Activated CD4-positive, alpha-beta memory T cell treated with anti-CD3 and anti-CD28 coated beads for 36 hours (primary cell): ENCODE measurements at regions of chr11 and their contacts with region 1.

Region 1: DNA sequence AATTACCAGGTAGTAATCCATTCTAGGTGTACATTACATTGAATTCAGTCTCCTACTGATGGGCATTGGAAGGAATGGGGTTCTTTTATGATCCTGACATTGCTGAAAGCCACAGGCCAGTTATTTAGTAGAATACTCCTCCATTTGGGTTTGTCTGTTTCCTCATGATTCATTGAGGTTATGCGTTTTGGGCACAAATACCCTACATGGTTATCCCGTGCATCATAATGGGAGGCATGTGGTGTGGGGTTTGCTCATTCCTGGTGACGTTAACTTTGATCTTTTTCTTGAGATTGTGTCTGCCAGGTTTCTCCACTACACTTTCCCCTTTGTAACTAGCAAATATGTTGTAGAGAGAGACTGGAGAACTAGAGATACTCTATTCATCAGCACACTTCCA is 5.5 kb downstream of the FOLR3 start:
- DNase-seq: peak; percentile 72
- H3K4me3 Mint-ChIP-seq: no peak overlapping the region
- H3K27ac Mint-ChIP-seq: peak overlapping the region; percentile 13
- H3K4me1 Mint-ChIP-seq: peaks cover 21% of the 10 kb centered on the region
- H3K27me3 Mint-ChIP-seq: peaks cover 11% of the 10 kb centered on the region

Region 2: GRCh38 chr11:72024069-72024754 is 116.9 kb before region 1 on chr11:
- CTCF ChIA-PET with region 1: interaction called, 118 read pairs
- POLR2A ChIA-PET with region 1: interaction called, 3 read pairs
- intact Hi-C with region 1: loop called (anchors 1 kb)
- DNase-seq: no peak
- H3K4me3 Mint-ChIP-seq: no peak overlapping the region
- H3K27ac Mint-ChIP-seq: peak overlapping the region; percentile 2
- H3K4me1 Mint-ChIP-seq: peaks cover 24% of the 10 kb centered on the region
- H3K27me3 Mint-ChIP-seq: no peaks in the 10 kb centered on the region

Region 3: DNA sequence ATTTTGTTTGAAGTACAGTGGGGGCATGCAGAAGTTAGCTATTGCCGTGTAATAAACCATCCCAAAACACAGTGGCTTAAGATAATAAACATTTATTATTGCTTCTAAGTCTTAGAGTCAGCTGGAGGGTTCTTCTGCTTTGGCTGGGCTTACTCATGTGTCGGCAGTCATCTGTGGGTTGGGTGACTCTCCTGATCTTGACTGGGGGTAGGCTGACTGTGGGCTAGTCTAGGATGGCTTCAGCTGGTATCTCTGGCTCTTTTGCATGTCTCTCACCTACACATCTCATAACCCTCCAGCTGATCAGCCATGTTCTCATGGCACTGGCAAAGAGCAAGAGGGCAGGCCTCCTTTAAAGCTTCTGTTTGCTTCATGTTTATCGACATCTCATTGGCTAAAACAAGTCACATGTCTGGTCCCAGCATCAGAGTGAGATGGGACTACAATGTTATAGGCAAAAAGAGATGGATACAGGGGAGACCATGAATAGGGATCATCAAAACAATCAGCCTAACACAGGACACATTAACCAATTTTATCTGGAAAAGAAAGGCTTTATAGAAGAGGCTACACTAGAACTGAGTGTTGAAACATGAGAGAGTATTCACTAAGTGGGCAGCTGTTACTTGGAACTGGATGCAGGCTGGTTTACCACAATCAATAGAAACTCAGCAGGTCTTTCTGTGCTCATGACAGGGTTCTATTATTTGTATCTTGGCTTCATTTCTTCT is 55.3 kb before region 1 on chr11:
- CTCF ChIA-PET with region 1: interaction called, 18 read pairs
- POLR2A ChIA-PET with region 1: no interaction called
- intact Hi-C with region 1: no loop called
- DNase-seq: no peak
- H3K4me3 Mint-ChIP-seq: no peak overlapping the region
- H3K27ac Mint-ChIP-seq: peak overlapping the region; percentile 1
- H3K4me1 Mint-ChIP-seq: peaks cover 23% of the 10 kb centered on the region
- H3K27me3 Mint-ChIP-seq: no peaks in the 10 kb centered on the region

Region 4: GRCh38 chr11:72112321-72113219 is 28.5 kb before region 1 on chr11 and contains the start of gene ANAPC15:
- CTCF ChIA-PET with region 1: interaction called, 19 read pairs
- POLR2A ChIA-PET with region 1: interaction called, 4 read pairs
- intact Hi-C with region 1: loop called (anchors 1 kb)
- DNase-seq: peak; percentile 100
- H3K4me3 Mint-ChIP-seq: peak within 1 kb of the TSS; percentile 93
- H3K27ac Mint-ChIP-seq: peak within 1 kb of the TSS; percentile 100
- H3K4me1 Mint-ChIP-seq: peaks cover 18% of the 10 kb centered on the region
- H3K27me3 Mint-ChIP-seq: no peaks in the 10 kb centered on the region
- total RNA-seq, gene ANAPC15: 62.6 to 64.2 TPM

Region 5: DNA sequence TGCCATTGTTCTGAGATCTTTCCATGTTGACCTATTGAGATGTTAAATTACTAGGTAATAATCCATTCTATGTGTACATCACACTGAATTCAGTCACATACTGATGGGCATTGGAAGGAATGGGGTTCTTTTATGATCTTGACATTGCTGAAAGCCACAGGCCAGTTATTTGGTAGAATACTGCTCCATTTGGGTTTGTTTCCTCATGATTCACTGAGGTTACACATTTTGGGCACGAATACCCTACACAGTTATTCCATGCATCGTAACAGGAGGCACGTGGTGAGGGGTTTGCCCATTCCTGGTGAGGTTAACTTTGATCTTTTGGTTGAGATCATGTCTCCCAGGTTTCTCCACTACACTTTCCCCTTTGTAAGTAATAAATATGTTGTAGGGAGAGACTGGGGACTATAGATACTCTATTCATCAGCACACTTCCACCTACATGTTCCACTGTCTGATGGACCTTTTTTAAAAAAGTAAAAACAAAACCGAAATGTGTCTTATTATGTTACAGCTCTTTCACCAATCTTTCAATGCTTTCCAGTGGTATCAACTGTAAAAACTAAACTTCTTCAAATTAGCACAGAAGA is 38.8 kb after region 1 on chr11:
- CTCF ChIA-PET with region 1: interaction called, 34 read pairs
- POLR2A ChIA-PET with region 1: no interaction called
- intact Hi-C with region 1: loop called (anchors 1 kb)
- DNase-seq: peak; percentile 22
- H3K4me3 Mint-ChIP-seq: no peak overlapping the region
- H3K27ac Mint-ChIP-seq: no peak overlapping the region
- H3K4me1 Mint-ChIP-seq: peaks cover 14% of the 10 kb centered on the region
- H3K27me3 Mint-ChIP-seq: peaks cover 6% of the 10 kb centered on the region

Region 6: DNA sequence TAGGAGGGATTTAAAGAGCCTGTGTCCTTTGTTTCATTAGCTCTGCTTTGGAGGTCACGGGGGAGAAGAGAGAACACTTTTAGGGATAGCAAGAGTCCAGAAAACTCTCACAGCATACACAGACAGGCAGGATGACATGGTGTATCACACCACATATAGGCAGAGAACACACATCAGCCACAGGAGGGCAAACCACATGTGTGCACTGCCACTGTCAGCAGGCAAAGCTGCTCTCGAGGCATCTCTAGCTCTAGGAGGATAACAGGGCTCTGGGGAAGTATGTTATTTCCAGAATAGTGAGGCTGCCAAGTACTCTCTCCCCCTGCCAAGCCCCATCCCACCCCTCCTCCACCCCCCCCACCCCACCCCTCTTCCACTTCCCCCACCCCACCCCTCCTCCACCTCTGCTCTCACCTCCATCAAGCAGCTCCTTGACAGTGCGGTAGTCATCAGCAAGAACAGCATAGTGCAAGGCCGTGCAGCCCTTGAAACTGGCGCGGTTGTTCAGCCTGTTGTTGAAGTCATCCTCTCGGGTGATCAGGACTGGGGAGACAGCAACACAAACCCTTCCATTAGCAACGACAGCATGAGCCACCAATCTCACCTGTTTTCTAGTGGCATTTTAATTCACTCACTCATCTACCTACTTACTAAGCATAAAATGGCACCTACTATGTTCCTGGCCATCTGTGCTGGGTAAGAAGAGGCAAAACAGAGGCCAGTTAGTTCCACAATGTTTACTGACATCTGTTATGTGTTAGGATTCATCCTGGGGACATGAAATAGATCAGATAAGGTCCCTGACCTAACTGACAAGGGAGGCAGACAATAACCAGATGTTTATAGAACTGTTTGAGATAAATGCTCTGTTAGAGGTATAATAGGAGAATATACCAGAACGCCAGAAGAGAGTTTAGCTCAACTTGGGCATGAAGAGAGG is 217.7 kb after region 1 on chr11:
- CTCF ChIA-PET with region 1: no interaction called
- POLR2A ChIA-PET with region 1: no interaction called
- intact Hi-C with region 1: no loop called
- DNase-seq: no peak
- H3K4me3 Mint-ChIP-seq: no peak overlapping the region
- H3K27ac Mint-ChIP-seq: no peak overlapping the region
- H3K4me1 Mint-ChIP-seq: no peaks in the 10 kb centered on the region
- H3K27me3 Mint-ChIP-seq: no peaks in the 10 kb centered on the region

Region 7: GRCh38 chr11:73384872-73385689 is 1244.0 kb after region 1 on chr11:
- CTCF ChIA-PET with region 1: no interaction called
- POLR2A ChIA-PET with region 1: no interaction called
- intact Hi-C with region 1: no loop called
- DNase-seq: peak; percentile 27
- H3K4me3 Mint-ChIP-seq: no peak overlapping the region
- H3K27ac Mint-ChIP-seq: peak overlapping the region; percentile 18
- H3K4me1 Mint-ChIP-seq: peaks cover 56% of the 10 kb centered on the region
- H3K27me3 Mint-ChIP-seq: no peaks in the 10 kb centered on the region